B cell (primary cell): ENCODE measurements at regions of chrX and their contacts with region 1.

Region 1: GRCh38 chrX:9464435-9465371 is at the start of gene TBL1X:
- DNase-seq: peak; percentile 65
- ATAC-seq: peak; percentile 70
- H3K4me3 ChIP-seq: peak within 1 kb of the TSS in 4 of 5 experiments; percentile 60 to 73 (median 69)
- H3K4me3 Mint-ChIP-seq: peak within 1 kb of the TSS; percentile 78
- H3K27ac ChIP-seq: peak within 1 kb of the TSS; percentile 18 to 61
- H3K27ac Mint-ChIP-seq: peak within 1 kb of the TSS; percentile 77
- H3K4me1 ChIP-seq: peaks cover 33 to 43% of the 10 kb centered on the region in 2 donors
- H3K4me1 Mint-ChIP-seq: peaks cover 45% of the 10 kb centered on the region
- H3K27me3 ChIP-seq: no peaks in the 10 kb centered on the region
- H3K27me3 Mint-ChIP-seq: no peaks in the 10 kb centered on the region
- CTCF ChIP-seq: no peak
- total RNA-seq, gene TBL1X: 61.3 and 65.1 TPM in 2 replicates

Region 2: DNA sequence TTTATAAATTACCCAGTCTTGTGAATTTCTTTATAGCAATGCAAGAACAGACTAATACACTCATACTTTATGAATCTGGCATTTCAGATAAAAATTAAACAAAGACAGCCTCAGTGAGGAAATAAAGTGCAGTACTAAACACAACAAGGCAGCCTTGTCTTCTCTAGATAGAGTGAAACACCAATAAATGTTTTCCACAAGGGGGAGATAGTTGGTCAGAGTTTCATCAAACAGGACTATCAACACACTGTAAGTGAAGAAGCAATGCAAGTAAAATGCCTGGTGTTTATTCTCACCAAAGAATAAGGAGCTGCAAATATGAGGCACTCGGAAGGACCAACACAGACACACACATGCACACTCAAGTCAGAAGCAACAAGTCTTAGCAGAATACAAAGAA is 493.6 kb before region 1 on chrX:
- CTCF ChIA-PET with region 1: interaction called, 9 read pairs
- POLR2A ChIA-PET with region 1: no interaction called
- intact Hi-C with region 1: loop called (anchors 5 kb)
- DNase-seq: peak; percentile 53
- ATAC-seq: peak; percentile 47
- H3K4me3 ChIP-seq: no peak overlapping the region
- H3K4me3 Mint-ChIP-seq: no peak overlapping the region
- H3K27ac ChIP-seq: no peak overlapping the region
- H3K27ac Mint-ChIP-seq: no peak overlapping the region
- H3K4me1 ChIP-seq: no peaks in the 10 kb centered on the region
- H3K4me1 Mint-ChIP-seq: no peaks in the 10 kb centered on the region
- H3K27me3 ChIP-seq: peaks cover 0 to 2% (median 0%) of the 10 kb centered on the region in 4 experiments
- H3K27me3 Mint-ChIP-seq: peaks cover 6% of the 10 kb centered on the region
- CTCF ChIP-seq: peak; percentile 35

Region 3: DNA sequence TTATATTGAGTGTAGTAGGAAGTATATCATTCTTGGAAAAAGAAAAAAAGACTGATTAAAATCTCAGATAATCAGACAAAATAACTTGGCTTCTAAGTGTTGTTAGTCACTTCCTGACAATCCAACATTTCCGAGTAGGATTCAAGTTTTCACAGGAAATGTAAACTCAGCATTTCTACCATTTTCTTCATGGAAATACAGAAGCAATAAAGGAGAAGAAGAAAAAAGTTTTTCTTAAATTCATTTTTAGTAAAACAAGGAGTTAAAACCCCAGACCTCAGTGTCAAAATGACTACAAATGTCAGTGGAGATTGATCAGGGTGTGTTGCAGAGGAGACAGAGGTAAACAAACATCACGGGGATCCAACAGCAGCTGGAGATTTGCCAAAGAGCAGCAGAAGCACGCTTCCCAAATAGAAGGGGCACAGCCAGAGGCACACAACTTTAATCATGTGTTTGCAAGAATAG is 301.5 kb before region 1 on chrX:
- CTCF ChIA-PET with region 1: no interaction called
- POLR2A ChIA-PET with region 1: interaction called, 3 read pairs
- intact Hi-C with region 1: loop called (anchors 2 kb)
- DNase-seq: no peak
- ATAC-seq: no peak
- H3K4me3 ChIP-seq: no peak overlapping the region
- H3K4me3 Mint-ChIP-seq: no peak overlapping the region
- H3K27ac ChIP-seq: no peak overlapping the region
- H3K27ac Mint-ChIP-seq: no peak overlapping the region
- H3K4me1 ChIP-seq: peaks cover 5 to 15% of the 10 kb centered on the region in 2 donors
- H3K4me1 Mint-ChIP-seq: peaks cover 26% of the 10 kb centered on the region
- H3K27me3 ChIP-seq: peaks cover 0 to 23% (median 9%) of the 10 kb centered on the region in 4 experiments
- H3K27me3 Mint-ChIP-seq: peaks cover 29% of the 10 kb centered on the region
- CTCF ChIP-seq: no peak

Region 4: GRCh38 chrX:9333873-9334560 is 130.7 kb before region 1 on chrX:
- CTCF ChIA-PET with region 1: no interaction called
- POLR2A ChIA-PET with region 1: no interaction called
- intact Hi-C with region 1: no loop called
- DNase-seq: no peak
- ATAC-seq: no peak
- H3K4me3 ChIP-seq: no peak overlapping the region
- H3K4me3 Mint-ChIP-seq: no peak overlapping the region
- H3K27ac ChIP-seq: no peak overlapping the region
- H3K27ac Mint-ChIP-seq: no peak overlapping the region
- H3K4me1 ChIP-seq: peaks cover 0 to 3% of the 10 kb centered on the region in 2 donors
- H3K4me1 Mint-ChIP-seq: peaks cover 3% of the 10 kb centered on the region
- H3K27me3 ChIP-seq: no peaks in the 10 kb centered on the region
- H3K27me3 Mint-ChIP-seq: peaks cover 3% of the 10 kb centered on the region
- CTCF ChIP-seq: no peak

Region 5: GRCh38 chrX:9525511-9526248 is 61.0 kb after region 1 on chrX:
- CTCF ChIA-PET with region 1: no interaction called
- POLR2A ChIA-PET with region 1: no interaction called
- intact Hi-C with region 1: loop called (anchors 5 kb)
- DNase-seq: peak; percentile 57
- ATAC-seq: peak; percentile 23
- H3K4me3 ChIP-seq: peak overlapping the region in 3 of 5 experiments; percentile 6 to 34 (median 13)
- H3K4me3 Mint-ChIP-seq: peak overlapping the region; percentile 70
- H3K27ac ChIP-seq: peak overlapping the region in 1 of 2 donors; percentile 18
- H3K27ac Mint-ChIP-seq: peak overlapping the region; percentile 16
- H3K4me1 ChIP-seq: peaks cover 39 to 42% of the 10 kb centered on the region in 2 donors
- H3K4me1 Mint-ChIP-seq: peaks cover 53% of the 10 kb centered on the region
- H3K27me3 ChIP-seq: no peaks in the 10 kb centered on the region
- H3K27me3 Mint-ChIP-seq: no peaks in the 10 kb centered on the region
- CTCF ChIP-seq: no peak

Region 6: GRCh38 chrX:9656277-9656676 is 191.6 kb after region 1 on chrX:
- CTCF ChIA-PET with region 1: no interaction called
- POLR2A ChIA-PET with region 1: no interaction called
- intact Hi-C with region 1: loop called (anchors 5 kb)
- DNase-seq: peak; percentile 62
- ATAC-seq: peak; percentile 82
- H3K4me3 ChIP-seq: no peak overlapping the region
- H3K4me3 Mint-ChIP-seq: peak overlapping the region; percentile 54
- H3K27ac ChIP-seq: peak overlapping the region; percentile 41 to 64
- H3K27ac Mint-ChIP-seq: peak overlapping the region; percentile 91
- H3K4me1 ChIP-seq: peaks cover 0 to 19% of the 10 kb centered on the region in 2 donors
- H3K4me1 Mint-ChIP-seq: peaks cover 23% of the 10 kb centered on the region
- H3K27me3 ChIP-seq: no peaks in the 10 kb centered on the region
- H3K27me3 Mint-ChIP-seq: no peaks in the 10 kb centered on the region
- CTCF ChIP-seq: no peak

Region 7: GRCh38 chrX:9677098-9677739 is 212.5 kb after region 1 on chrX:
- CTCF ChIA-PET with region 1: interaction called, 5 read pairs
- POLR2A ChIA-PET with region 1: no interaction called
- intact Hi-C with region 1: loop called (anchors 1 kb)
- DNase-seq: peak; percentile 82
- ATAC-seq: peak; percentile 91
- H3K4me3 ChIP-seq: no peak overlapping the region
- H3K4me3 Mint-ChIP-seq: peak overlapping the region; percentile 77
- H3K27ac ChIP-seq: peak overlapping the region; percentile 69 to 81
- H3K27ac Mint-ChIP-seq: peak overlapping the region; percentile 92
- H3K4me1 ChIP-seq: peaks cover 24 to 38% of the 10 kb centered on the region in 2 donors
- H3K4me1 Mint-ChIP-seq: peaks cover 44% of the 10 kb centered on the region
- H3K27me3 ChIP-seq: no peaks in the 10 kb centered on the region
- H3K27me3 Mint-ChIP-seq: no peaks in the 10 kb centered on the region
- CTCF ChIP-seq: no peak

Region 8: DNA sequence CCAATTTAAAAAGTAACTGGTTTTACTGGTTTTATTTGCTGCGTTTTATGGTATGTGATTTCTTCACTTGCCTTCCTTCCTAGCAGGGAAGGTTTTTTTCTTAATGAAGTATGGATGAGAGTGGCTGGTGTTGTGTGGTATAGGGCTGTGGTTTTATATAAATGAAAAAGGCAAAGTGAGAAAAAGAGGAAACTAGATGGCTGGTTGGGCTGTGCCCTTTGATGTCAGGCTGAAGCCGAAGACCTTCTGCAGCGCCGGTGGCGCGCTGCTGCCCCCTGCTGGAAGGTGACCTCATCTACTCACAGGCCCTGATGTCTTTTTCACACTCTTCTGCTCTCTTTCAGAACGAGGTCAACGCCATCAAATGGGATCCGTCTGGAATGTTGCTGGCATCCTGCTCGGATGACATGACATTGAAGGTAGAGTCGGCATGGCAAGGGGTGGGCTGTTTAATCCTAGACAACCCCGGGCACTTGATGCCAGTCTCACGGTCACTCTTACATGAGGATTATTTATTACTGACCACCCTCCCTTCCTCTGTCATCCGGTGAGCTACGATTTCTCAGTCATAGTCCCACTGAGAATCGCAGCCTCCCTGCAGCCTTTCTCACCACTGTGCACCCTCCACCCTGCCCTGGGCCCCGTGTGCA is 244.3 kb after region 1 on chrX:
- CTCF ChIA-PET with region 1: no interaction called
- POLR2A ChIA-PET with region 1: no interaction called
- intact Hi-C with region 1: loop called (anchors 1 kb)
- DNase-seq: peak; percentile 86
- ATAC-seq: peak; percentile 89
- H3K4me3 ChIP-seq: no peak overlapping the region
- H3K4me3 Mint-ChIP-seq: peak overlapping the region; percentile 29
- H3K27ac ChIP-seq: no peak overlapping the region
- H3K27ac Mint-ChIP-seq: no peak overlapping the region
- H3K4me1 ChIP-seq: peaks cover 7 to 10% of the 10 kb centered on the region in 2 donors
- H3K4me1 Mint-ChIP-seq: peaks cover 12% of the 10 kb centered on the region
- H3K27me3 ChIP-seq: no peaks in the 10 kb centered on the region
- H3K27me3 Mint-ChIP-seq: no peaks in the 10 kb centered on the region
- CTCF ChIP-seq: peak; percentile 70

Region 9: GRCh38 chrX:10415306-10416001 is 950.8 kb after region 1 on chrX:
- CTCF ChIA-PET with region 1: no interaction called
- POLR2A ChIA-PET with region 1: no interaction called
- intact Hi-C with region 1: no loop called
- DNase-seq: no peak
- ATAC-seq: no peak
- H3K4me3 ChIP-seq: no peak overlapping the region
- H3K4me3 Mint-ChIP-seq: no peak overlapping the region
- H3K27ac ChIP-seq: no peak overlapping the region
- H3K27ac Mint-ChIP-seq: no peak overlapping the region
- H3K4me1 ChIP-seq: no peaks in the 10 kb centered on the region
- H3K4me1 Mint-ChIP-seq: no peaks in the 10 kb centered on the region
- H3K27me3 ChIP-seq: no peaks in the 10 kb centered on the region
- H3K27me3 Mint-ChIP-seq: no peaks in the 10 kb centered on the region
- CTCF ChIP-seq: no peak